CD4-positive, alpha-beta memory T cell (primary cell): ENCODE measurements at regions of chr2 and their contacts with region 1.

Region 1: GRCh38 chr2:231514103-231514950 is 15.9 kb downstream of the NMUR1 start:
- DNase-seq: peak; percentile 98 to 99 (median 99)
- H3K4me3 ChIP-seq: peak overlapping the region; percentile 88 to 90
- H3K4me3 Mint-ChIP-seq: peak overlapping the region; percentile 88 to 91 (median 90)
- H3K27ac ChIP-seq: peak overlapping the region; percentile 87
- H3K27ac Mint-ChIP-seq: peak overlapping the region; percentile 94 to 99 (median 99)
- H3K4me1 ChIP-seq: peaks cover 14% of the 10 kb centered on the region
- H3K4me1 Mint-ChIP-seq: peaks cover 14 to 25% (median 21%) of the 10 kb centered on the region in 4 donors
- H3K27me3 ChIP-seq: no peaks in the 10 kb centered on the region
- H3K27me3 Mint-ChIP-seq: peaks cover 0 to 2% of the 10 kb centered on the region in 2 donors

Region 2: GRCh38 chr2:231198291-231199173 is 315.8 kb before region 1 on chr2 and contains the start of gene ARMC9:
- CTCF ChIA-PET with region 1: no interaction called
- POLR2A ChIA-PET with region 1: no interaction called
- intact Hi-C with region 1: no loop called
- DNase-seq: peak; percentile 56 to 73 (median 63)
- H3K4me3 ChIP-seq: peak within 1 kb of the TSS; percentile 93 to 97
- H3K4me3 Mint-ChIP-seq: peak within 1 kb of the TSS; percentile 91 to 96 (median 93)
- H3K27ac ChIP-seq: peak within 1 kb of the TSS; percentile 40
- H3K27ac Mint-ChIP-seq: peak within 1 kb of the TSS in 5 of 7 donors; percentile 22 to 89 (median 78)
- H3K4me1 ChIP-seq: peaks cover 13% of the 10 kb centered on the region
- H3K4me1 Mint-ChIP-seq: peaks cover 0 to 19% (median 11%) of the 10 kb centered on the region in 4 donors
- H3K27me3 ChIP-seq: no peaks in the 10 kb centered on the region
- H3K27me3 Mint-ChIP-seq: peaks cover 5 to 6% of the 10 kb centered on the region in 2 donors
- total RNA-seq, gene ARMC9: 1.1 to 1.4 TPM

Region 3: DNA sequence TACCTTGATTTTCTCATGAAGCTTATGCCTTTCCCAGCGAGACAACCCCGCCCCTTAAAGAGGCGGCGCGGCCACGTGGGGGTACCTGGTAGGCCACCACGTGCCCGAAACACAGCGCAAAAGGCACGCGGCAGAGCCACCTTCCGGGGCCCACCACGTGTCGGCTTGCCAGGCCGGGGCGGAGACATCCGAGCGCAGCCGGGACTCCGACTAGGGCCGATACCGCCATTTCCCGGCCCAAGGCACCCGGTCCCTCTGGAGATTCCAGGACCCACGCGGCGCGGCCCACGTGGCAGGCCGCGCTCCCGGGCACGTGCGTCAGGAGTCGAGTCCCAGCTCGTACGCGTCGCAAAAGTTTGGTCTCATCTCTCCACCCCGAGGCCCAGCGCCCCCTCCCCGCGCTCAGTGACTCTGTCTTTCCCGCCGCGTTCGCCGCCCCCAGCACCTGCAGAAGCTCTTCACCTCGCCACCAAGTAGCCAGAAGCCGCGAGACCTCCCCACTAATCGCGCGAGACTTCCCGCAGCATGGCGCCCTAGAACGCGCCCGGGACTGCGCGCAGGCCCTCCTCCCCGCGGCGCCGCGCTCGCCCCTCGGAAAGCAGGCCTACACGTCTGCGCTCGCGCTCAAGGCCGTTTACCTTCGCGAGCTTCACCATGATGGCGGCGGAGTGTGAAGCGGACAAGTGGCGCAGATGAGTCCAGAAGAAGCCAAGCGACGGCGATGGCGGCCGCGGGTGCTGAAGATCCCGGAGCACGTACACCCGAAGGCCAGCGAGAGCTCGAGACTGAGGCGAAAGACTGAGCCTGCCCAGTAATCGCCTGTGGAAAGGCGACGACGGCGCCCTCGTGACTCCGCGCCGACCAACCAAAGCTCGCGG is 50.4 kb before region 1 on chr2 and contains the start of gene NCL:
- CTCF ChIA-PET with region 1: interaction called, 3 read pairs
- POLR2A ChIA-PET with region 1: interaction called, 54 read pairs
- intact Hi-C with region 1: loop called (anchors 1 kb)
- DNase-seq: peak; percentile 90 to 96 (median 92)
- H3K4me3 ChIP-seq: peak within 1 kb of the TSS; percentile 77 to 92
- H3K4me3 Mint-ChIP-seq: peak within 1 kb of the TSS; percentile 92 to 98 (median 96)
- H3K27ac ChIP-seq: peak within 1 kb of the TSS; percentile 96
- H3K27ac Mint-ChIP-seq: peak within 1 kb of the TSS; percentile 99 to 100 (median 99)
- H3K4me1 ChIP-seq: peaks cover 51% of the 10 kb centered on the region
- H3K4me1 Mint-ChIP-seq: peaks cover 31 to 59% (median 45%) of the 10 kb centered on the region in 4 donors
- H3K27me3 ChIP-seq: no peaks in the 10 kb centered on the region
- H3K27me3 Mint-ChIP-seq: peaks cover 0 to 3% of the 10 kb centered on the region in 2 donors
- total RNA-seq, gene NCL: 380 to 390 TPM

Region 4: GRCh38 chr2:231530091-231531011 is 16.0 kb after region 1 on chr2 and contains the start of gene NMUR1:
- CTCF ChIA-PET with region 1: interaction called, 11 read pairs
- POLR2A ChIA-PET with region 1: interaction called, 4 read pairs
- intact Hi-C with region 1: loop called (anchors 1 kb)
- DNase-seq: peak; percentile 59 to 77 (median 74)
- H3K4me3 ChIP-seq: peak within 1 kb of the TSS in 1 of 2 donors; percentile 43
- H3K4me3 Mint-ChIP-seq: peak within 1 kb of the TSS; percentile 34 to 72 (median 64)
- H3K27ac ChIP-seq: peak within 1 kb of the TSS; percentile 31
- H3K27ac Mint-ChIP-seq: peak within 1 kb of the TSS in 3 of 7 donors; percentile 6 to 47 (median 37)
- H3K4me1 ChIP-seq: peaks cover 27% of the 10 kb centered on the region
- H3K4me1 Mint-ChIP-seq: peaks cover 11 to 50% (median 29%) of the 10 kb centered on the region in 4 donors
- H3K27me3 ChIP-seq: no peaks in the 10 kb centered on the region
- H3K27me3 Mint-ChIP-seq: peaks cover 0 to 5% of the 10 kb centered on the region in 2 donors
- total RNA-seq, gene NMUR1: not detected

Region 5: GRCh38 chr2:231604685-231605606 is 90.6 kb after region 1 on chr2:
- CTCF ChIA-PET with region 1: interaction called, 27 read pairs
- POLR2A ChIA-PET with region 1: interaction called, 5 read pairs
- intact Hi-C with region 1: loop called (anchors 1 kb)
- DNase-seq: peak; percentile 94 to 97 (median 96)
- H3K4me3 ChIP-seq: peak overlapping the region in 1 of 2 donors; percentile 52
- H3K4me3 Mint-ChIP-seq: peak overlapping the region; percentile 69 to 82 (median 74)
- H3K27ac ChIP-seq: peak overlapping the region; percentile 89
- H3K27ac Mint-ChIP-seq: peak overlapping the region; percentile 89 to 97 (median 95)
- H3K4me1 ChIP-seq: peaks cover 14% of the 10 kb centered on the region
- H3K4me1 Mint-ChIP-seq: peaks cover 4 to 14% (median 10%) of the 10 kb centered on the region in 4 donors
- H3K27me3 ChIP-seq: no peaks in the 10 kb centered on the region
- H3K27me3 Mint-ChIP-seq: no peaks in the 10 kb centered on the region

Region 6: GRCh38 chr2:231706731-231707624 is 192.7 kb after region 1 on chr2:
- CTCF ChIA-PET with region 1: no interaction called
- POLR2A ChIA-PET with region 1: interaction called, 14 read pairs
- intact Hi-C with region 1: loop called (anchors 1 kb)
- DNase-seq: peak; percentile 97 to 98 (median 98)
- H3K4me3 ChIP-seq: peak overlapping the region; percentile 90 to 96
- H3K4me3 Mint-ChIP-seq: peak overlapping the region; percentile 95 to 98 (median 97)
- H3K27ac ChIP-seq: peak overlapping the region; percentile 100
- H3K27ac Mint-ChIP-seq: peak overlapping the region; percentile 100
- H3K4me1 ChIP-seq: peaks cover 28% of the 10 kb centered on the region
- H3K4me1 Mint-ChIP-seq: peaks cover 10 to 54% (median 18%) of the 10 kb centered on the region in 4 donors
- H3K27me3 ChIP-seq: no peaks in the 10 kb centered on the region
- H3K27me3 Mint-ChIP-seq: peaks cover 0 to 6% of the 10 kb centered on the region in 2 donors

Region 7: GRCh38 chr2:232550354-232551249 is 1036.3 kb after region 1 on chr2 and contains the starts of genes EIF4E2 and TIGD1:
- CTCF ChIA-PET with region 1: no interaction called
- POLR2A ChIA-PET with region 1: no interaction called
- intact Hi-C with region 1: loop called (anchors 5 kb)
- DNase-seq: peak; percentile 87 to 92 (median 88)
- H3K4me3 ChIP-seq: peak within 1 kb of the TSS; percentile 79 to 80
- H3K4me3 Mint-ChIP-seq: peak within 1 kb of the TSS; percentile 99 to 100 (median 100)
- H3K27ac ChIP-seq: peak within 1 kb of the TSS; percentile 94
- H3K27ac Mint-ChIP-seq: peak within 1 kb of the TSS; percentile 96 to 100 (median 99)
- H3K4me1 ChIP-seq: peaks cover 77% of the 10 kb centered on the region
- H3K4me1 Mint-ChIP-seq: peaks cover 60 to 91% (median 80%) of the 10 kb centered on the region in 4 donors
- H3K27me3 ChIP-seq: no peaks in the 10 kb centered on the region
- H3K27me3 Mint-ChIP-seq: no peaks in the 10 kb centered on the region
- total RNA-seq, gene EIF4E2: 72.4 to 75.5 TPM
- total RNA-seq, gene TIGD1: 18.9 to 19.3 TPM